ENCODE measurements at regions of chr6 and their contacts with region 1.

Region 1: GRCh38 chr6:14711056-14711703 is 534.7 kb upstream of the JARID2 start:
- DNase-seq: peak; percentile 82
- ATAC-seq: peak; percentile 85
- H3K4me3 Mint-ChIP-seq: peak overlapping the region; percentile 42
- H3K27ac Mint-ChIP-seq: peak overlapping the region; percentile 100
- H3K4me1 Mint-ChIP-seq: peaks cover 57% of the 10 kb centered on the region
- H3K27me3 Mint-ChIP-seq: no peaks in the 10 kb centered on the region

Region 2: DNA sequence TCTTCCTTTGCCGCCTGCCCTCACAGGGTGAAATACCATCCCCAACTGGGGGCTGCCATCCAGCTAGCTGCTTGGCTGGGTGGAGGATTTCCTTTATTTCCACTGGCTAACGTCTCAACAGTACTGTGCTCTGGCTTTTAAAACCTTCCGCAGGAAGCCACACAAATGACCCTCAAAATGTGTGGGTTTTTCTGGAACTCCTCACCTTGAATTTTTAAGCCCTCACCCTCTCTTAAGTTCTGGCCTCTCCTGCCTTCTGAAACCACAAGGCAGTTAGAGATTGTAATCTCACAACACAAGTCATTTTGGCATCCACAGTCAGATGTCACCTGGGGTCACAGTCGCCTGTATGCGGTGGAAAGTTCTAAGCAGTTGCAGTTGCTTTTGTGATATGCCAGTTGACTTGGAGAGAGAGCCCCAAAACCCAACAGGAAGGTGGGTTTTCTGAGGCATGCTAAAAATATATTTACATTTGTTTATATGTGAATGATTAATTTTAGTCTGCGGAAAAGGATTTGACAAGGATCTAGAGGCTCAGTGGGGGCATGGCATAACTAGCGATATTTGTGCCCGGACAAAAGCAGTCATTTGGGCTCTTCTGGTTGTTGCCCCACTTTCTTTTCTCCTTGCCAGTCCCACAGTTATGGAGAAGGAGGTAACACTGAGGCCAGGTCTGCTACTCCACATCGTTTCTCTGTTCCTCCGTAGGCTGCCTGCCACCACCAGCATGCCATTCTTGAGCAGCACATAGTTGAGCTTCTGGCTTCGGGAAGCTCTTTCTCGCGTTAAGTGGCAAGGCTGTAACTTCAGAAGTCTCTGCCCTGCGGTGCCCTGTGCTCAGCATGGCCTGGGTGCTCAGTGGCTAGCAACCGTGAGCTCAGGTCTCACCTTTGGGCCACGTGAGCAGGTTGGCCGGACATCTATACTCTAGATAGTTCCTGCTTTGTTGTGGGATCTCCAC is 258.3 kb before region 1 on chr6:
- CTCF ChIA-PET with region 1: no interaction called
- POLR2A ChIA-PET with region 1: no interaction called
- intact Hi-C with region 1: loop called (anchors 1 to 5 kb)
- DNase-seq: peak; percentile 85
- ATAC-seq: peak; percentile 70
- H3K4me3 Mint-ChIP-seq: peak overlapping the region; percentile 26
- H3K27ac Mint-ChIP-seq: peak overlapping the region; percentile 83
- H3K4me1 Mint-ChIP-seq: peaks cover 89% of the 10 kb centered on the region
- H3K27me3 Mint-ChIP-seq: no peaks in the 10 kb centered on the region

Region 3: DNA sequence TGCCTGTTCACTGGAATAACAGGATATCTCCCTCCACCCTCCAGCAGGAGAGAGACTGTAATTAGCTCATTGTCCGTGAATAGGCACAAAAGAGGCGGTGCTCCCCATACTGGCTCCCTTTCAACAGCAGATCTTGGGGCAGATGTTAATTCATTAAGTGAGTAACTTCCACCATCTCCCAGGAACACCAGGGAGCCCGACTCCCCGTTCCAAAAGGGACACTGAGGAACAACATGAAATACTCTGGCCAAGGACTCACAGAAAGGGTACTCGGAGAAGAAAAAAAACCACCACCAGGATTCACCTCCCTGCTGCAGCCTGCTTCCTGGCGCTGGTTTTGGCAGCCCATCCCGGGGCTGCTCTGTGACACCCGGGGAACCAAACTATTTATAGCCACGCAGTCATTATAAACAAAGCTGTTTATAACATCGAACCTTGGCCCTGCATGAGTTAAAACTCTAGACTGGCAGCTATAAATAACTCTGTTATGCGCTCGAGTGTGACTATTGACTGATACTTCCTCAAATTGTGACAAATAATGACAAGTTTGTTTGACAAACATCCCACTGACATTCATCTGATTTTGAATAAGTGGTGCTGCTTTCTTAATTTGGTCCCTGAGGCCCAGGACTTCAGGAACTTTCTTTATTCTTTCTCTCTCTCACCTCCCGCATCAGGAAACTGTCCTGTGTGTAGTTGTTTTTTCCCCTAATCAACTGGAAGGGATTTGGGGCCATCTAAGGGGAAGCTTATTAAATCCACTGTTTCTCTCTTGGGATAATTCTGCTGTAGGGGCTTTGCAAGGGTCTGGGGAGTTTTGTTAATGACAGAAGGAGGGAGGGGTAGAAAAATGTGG is 72.0 kb before region 1 on chr6:
- CTCF ChIA-PET with region 1: interaction called, 3 read pairs
- POLR2A ChIA-PET with region 1: no interaction called
- intact Hi-C with region 1: loop called (anchors 2 to 5 kb)
- DNase-seq: no peak
- ATAC-seq: no peak
- H3K4me3 Mint-ChIP-seq: no peak overlapping the region
- H3K27ac Mint-ChIP-seq: peak overlapping the region; percentile 56
- H3K4me1 Mint-ChIP-seq: peaks cover 65% of the 10 kb centered on the region
- H3K27me3 Mint-ChIP-seq: no peaks in the 10 kb centered on the region

Region 4: GRCh38 chr6:14671261-14671681 is 39.9 kb before region 1 on chr6:
- CTCF ChIA-PET with region 1: interaction called, 4 read pairs
- POLR2A ChIA-PET with region 1: no interaction called
- intact Hi-C with region 1: loop called (anchors 2 to 5 kb)
- DNase-seq: no peak
- ATAC-seq: no peak
- H3K4me3 Mint-ChIP-seq: no peak overlapping the region
- H3K27ac Mint-ChIP-seq: no peak overlapping the region
- H3K4me1 Mint-ChIP-seq: peaks cover 42% of the 10 kb centered on the region
- H3K27me3 Mint-ChIP-seq: no peaks in the 10 kb centered on the region

Region 5: DNA sequence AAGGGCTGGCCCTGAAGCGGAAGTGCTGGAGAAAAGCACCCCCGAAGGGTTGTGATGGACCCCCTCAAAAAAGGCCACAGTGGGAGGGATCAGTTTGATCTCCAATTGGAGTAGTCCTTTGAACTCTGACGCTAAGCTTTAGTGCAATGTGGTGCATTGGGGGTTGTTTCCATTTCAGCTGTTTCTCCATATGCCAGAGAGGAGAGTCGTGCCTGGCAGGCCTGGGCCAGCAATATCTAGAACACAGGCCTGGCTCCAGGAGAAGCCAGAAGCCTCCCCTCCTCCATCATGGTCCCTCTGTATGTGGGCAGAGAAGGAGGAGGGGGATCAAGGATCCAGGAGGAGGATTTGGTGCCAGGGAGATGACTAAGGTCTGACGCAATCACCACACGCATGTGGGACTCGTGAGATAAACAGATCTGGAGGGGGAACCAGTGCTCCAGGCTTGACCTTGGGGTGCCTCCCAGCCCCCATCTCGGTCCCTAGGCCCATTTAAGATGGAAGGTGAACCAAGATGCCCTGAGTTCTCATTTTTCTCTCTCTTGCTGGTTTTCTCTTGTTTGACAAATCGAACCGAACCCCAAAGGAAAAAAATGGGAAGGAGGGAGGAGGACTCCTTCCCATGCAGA is 17.3 kb after region 1 on chr6:
- CTCF ChIA-PET with region 1: interaction called, 19 read pairs
- POLR2A ChIA-PET with region 1: interaction called, 11 read pairs
- intact Hi-C with region 1: loop called (anchors 1 kb)
- DNase-seq: peak; percentile 32
- ATAC-seq: no peak
- H3K4me3 Mint-ChIP-seq: no peak overlapping the region
- H3K27ac Mint-ChIP-seq: peak overlapping the region; percentile 100
- H3K4me1 Mint-ChIP-seq: peaks cover 74% of the 10 kb centered on the region
- H3K27me3 Mint-ChIP-seq: no peaks in the 10 kb centered on the region

Region 6: GRCh38 chr6:14763139-14763538 is 52.0 kb after region 1 on chr6:
- CTCF ChIA-PET with region 1: no interaction called
- POLR2A ChIA-PET with region 1: no interaction called
- intact Hi-C with region 1: no loop called
- DNase-seq: no peak
- ATAC-seq: no peak
- H3K4me3 Mint-ChIP-seq: no peak overlapping the region
- H3K27ac Mint-ChIP-seq: peak overlapping the region; percentile 47
- H3K4me1 Mint-ChIP-seq: peaks cover 45% of the 10 kb centered on the region
- H3K27me3 Mint-ChIP-seq: no peaks in the 10 kb centered on the region

Measured in activated CD4-positive, alpha-beta T cell treated with anti-CD3 and anti-CD28 coated beads for 36 hours (primary cell).